PC-3 (cell line): ENCODE measurements at regions of chr4 and their contacts with region 1.

Region 1: DNA sequence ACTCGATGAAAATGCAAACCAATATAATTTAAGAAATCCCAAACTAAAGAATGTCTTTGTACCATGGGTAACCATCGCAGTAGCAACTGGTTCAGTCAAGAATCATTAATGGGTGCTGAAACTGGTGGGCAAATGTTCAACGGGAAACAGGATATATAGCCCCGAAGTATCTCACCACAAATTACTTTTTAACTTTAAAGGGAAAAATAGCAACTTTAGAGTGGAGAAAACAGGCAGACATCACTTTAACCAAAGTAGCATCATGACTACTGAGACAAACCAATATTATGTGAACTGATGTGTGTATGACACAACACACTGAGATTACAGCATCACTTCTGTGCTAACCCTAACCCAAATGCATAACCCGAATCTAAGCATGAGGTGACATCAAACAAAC is 33.8 kb upstream of the SLAIN2 start:
- DNase-seq: no peak
- ATAC-seq: no peak
- H3K4me3 ChIP-seq: no peak overlapping the region
- H3K27ac ChIP-seq: no peak overlapping the region
- H3K4me1 ChIP-seq: no peaks in the 10 kb centered on the region
- H3K27me3 ChIP-seq: no peaks in the 10 kb centered on the region
- CTCF ChIP-seq: no peak

Region 2: DNA sequence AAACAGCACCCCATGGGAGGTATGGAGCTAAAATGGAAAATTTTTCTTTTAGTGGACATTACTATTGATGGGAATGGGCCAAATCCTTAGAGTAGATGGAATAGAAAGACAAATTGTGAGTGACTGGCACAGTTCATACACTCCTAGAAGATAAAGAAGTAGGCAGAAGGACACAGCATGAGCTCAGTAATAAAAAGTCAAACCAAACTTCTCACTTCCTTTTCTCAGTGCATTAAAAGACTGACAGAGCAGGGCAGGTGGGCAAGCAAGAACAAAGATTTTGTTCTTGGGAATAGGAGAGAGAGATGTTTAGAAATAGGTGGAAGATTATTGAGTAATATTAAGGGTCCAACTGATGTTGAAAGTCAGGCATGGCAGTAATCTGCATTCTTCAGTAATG is 689.9 kb before region 1 on chr4:
- CTCF ChIA-PET with region 1: no interaction called
- POLR2A ChIA-PET with region 1: no interaction called
- intact Hi-C with region 1: no loop called
- DNase-seq: no peak
- ATAC-seq: no peak
- H3K4me3 ChIP-seq: no peak overlapping the region
- H3K27ac ChIP-seq: no peak overlapping the region
- H3K4me1 ChIP-seq: no peaks in the 10 kb centered on the region
- H3K27me3 ChIP-seq: peaks cover 4% of the 10 kb centered on the region; the same call in 1 of the 2 replicates
- CTCF ChIP-seq: no peak

Region 3: GRCh38 chr4:48042979-48043461 is 264.5 kb before region 1 on chr4:
- CTCF ChIA-PET with region 1: no interaction called
- POLR2A ChIA-PET with region 1: no interaction called
- intact Hi-C with region 1: no loop called
- DNase-seq: no peak
- ATAC-seq: peak; percentile 24
- H3K4me3 ChIP-seq: no peak overlapping the region
- H3K27ac ChIP-seq: no peak overlapping the region
- H3K4me1 ChIP-seq: peaks cover 14% of the 10 kb centered on the region; the same call in 1 of the 2 replicates
- H3K27me3 ChIP-seq: no peaks in the 10 kb centered on the region
- CTCF ChIP-seq: no peak

Region 4: DNA sequence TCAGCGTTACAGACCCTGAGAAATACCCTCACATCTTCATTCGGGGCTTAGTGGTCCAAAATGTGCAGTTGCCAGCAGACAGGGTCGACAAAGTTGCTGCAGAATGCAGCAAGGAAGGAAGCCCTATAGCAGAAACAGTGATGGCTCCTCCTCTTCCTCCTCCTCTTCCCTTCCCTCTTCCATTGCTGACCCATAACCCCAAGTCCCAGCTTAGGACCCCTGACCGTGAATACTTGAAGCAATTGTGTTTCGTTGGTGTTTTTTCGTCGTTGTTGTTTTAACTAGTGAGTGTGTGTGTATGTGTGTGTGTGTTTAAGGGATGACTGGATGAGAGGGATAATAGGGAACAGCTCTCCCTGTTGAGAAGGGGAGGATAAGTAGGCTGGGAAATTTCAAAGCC is 103.3 kb after region 1 on chr4:
- CTCF ChIA-PET with region 1: no interaction called
- POLR2A ChIA-PET with region 1: no interaction called
- intact Hi-C with region 1: loop called (anchors 10 kb)
- DNase-seq: no peak
- ATAC-seq: no peak
- H3K4me3 ChIP-seq: no peak overlapping the region
- H3K27ac ChIP-seq: no peak overlapping the region
- H3K4me1 ChIP-seq: no peaks in the 10 kb centered on the region
- H3K27me3 ChIP-seq: no peaks in the 10 kb centered on the region
- CTCF ChIP-seq: no peak